ENCODE measurements at regions of chr10 and their contacts with region 1.

Region 1: DNA sequence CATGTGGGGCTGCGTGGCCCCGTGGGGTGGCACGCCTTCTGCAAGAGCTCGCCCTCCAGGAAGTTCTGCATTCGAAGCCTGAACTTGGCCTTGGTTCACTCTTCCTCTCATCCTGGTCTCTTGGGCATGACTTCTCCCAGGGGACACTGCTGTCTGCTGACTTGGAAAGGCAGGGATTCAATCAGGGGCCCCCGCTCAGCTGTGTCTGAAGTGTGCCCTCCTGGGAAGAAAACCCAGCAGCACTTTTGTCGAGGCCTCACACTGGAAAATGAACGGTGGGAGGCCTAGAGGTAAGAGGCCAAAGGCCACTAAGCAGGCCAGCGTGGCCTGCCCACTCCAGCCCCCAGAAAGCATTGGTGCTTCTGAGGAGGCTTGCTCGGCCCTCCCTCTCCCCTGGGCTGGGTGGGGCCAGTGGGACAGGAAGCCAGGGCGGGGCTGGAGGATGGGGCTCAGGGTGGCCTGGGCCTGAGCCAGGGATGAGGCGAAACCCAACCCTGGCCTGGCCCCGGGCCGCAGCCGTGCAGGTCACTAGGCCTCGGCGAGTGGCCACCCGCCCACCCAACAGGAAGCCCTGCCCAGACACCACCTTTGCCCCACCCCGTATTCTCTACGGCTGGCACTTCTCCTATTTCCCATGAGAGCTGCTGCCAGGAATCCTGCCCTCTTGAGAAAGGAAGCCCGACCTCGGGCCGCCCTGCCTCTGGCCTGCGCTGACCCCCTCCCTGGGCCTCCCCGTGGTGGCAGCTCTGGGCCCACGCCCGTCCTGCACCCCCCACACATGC is 81.1 kb downstream of the ZMIZ1 start:
- DNase-seq: no peak
- H3K4me3 ChIP-seq: no peak overlapping the region
- H3K27me3 ChIP-seq: no peaks in the 10 kb centered on the region
- CTCF ChIP-seq: no peak

Region 2: GRCh38 chr10:78820007-78820362 is 329.9 kb before region 1 on chr10:
- CTCF ChIA-PET with region 1: no interaction called
- POLR2A ChIA-PET with region 1: interaction called, 27 read pairs
- DNase-seq: no peak
- H3K4me3 ChIP-seq: no peak overlapping the region
- H3K27me3 ChIP-seq: peaks cover 1% of the 10 kb centered on the region; the same call in 1 of the 2 replicates
- CTCF ChIP-seq: no peak

Region 3: GRCh38 chr10:79139124-79139835 is 10.6 kb before region 1 on chr10:
- CTCF ChIA-PET with region 1: interaction called, 3 read pairs
- POLR2A ChIA-PET with region 1: interaction called, 13 read pairs
- DNase-seq: peak; percentile 94
- H3K4me3 ChIP-seq: no peak overlapping the region
- H3K27me3 ChIP-seq: no peaks in the 10 kb centered on the region
- CTCF ChIP-seq: no peak